GM12878 (cell line): ENCODE measurements at regions of chr1 and their contacts with region 1.

Region 1: GRCh38 chr1:209784265-209785169 is at the start of gene C1orf74:
- DNase-seq: peak; percentile 92
- ATAC-seq: peak; percentile 100
- H3K4me3 ChIP-seq: peak within 1 kb of the TSS; percentile 80
- H3K27ac ChIP-seq: peak within 1 kb of the TSS; percentile 76
- H3K4me1 ChIP-seq: 0 out of 2 replicates have a peak, but pooled peaks cover 2% of the 10 kb centered on the region
- H3K27me3 ChIP-seq: no peaks in the 10 kb centered on the region
- CTCF ChIP-seq: no peak
- EP300 ChIP-seq: no peak
- POLR2A ChIP-seq: peak; percentile 90
- RAD21 ChIP-seq: no peak
- polyA plus RNA-seq, gene C1orf74: 3.4 to 4.4 TPM

Region 2: GRCh38 chr1:209576798-209577197 is 207.7 kb before region 1 on chr1:
- CTCF ChIA-PET with region 1: no interaction called
- POLR2A ChIA-PET with region 1: no interaction called
- RAD21 ChIA-PET with region 1: no interaction called
- SMC1A ChIA-PET with region 1: no interaction called
- in situ Hi-C with region 1: no loop called
- intact Hi-C with region 1: no loop called
- DNase-seq: peak; percentile 12
- ATAC-seq: peak; percentile 99
- H3K4me3 ChIP-seq: no peak overlapping the region
- H3K27ac ChIP-seq: no peak overlapping the region
- H3K4me1 ChIP-seq: no peaks in the 10 kb centered on the region
- H3K27me3 ChIP-seq: peaks cover under 1 to 1% of the 10 kb centered on the region in 2 experiments; a peak in 3 of 4 replicates
- CTCF ChIP-seq: peak; percentile 93 to 96 (median 94)
- EP300 ChIP-seq: no peak
- POLR2A ChIP-seq: no peak
- RAD21 ChIP-seq: peak; percentile 86

Region 3: DNA sequence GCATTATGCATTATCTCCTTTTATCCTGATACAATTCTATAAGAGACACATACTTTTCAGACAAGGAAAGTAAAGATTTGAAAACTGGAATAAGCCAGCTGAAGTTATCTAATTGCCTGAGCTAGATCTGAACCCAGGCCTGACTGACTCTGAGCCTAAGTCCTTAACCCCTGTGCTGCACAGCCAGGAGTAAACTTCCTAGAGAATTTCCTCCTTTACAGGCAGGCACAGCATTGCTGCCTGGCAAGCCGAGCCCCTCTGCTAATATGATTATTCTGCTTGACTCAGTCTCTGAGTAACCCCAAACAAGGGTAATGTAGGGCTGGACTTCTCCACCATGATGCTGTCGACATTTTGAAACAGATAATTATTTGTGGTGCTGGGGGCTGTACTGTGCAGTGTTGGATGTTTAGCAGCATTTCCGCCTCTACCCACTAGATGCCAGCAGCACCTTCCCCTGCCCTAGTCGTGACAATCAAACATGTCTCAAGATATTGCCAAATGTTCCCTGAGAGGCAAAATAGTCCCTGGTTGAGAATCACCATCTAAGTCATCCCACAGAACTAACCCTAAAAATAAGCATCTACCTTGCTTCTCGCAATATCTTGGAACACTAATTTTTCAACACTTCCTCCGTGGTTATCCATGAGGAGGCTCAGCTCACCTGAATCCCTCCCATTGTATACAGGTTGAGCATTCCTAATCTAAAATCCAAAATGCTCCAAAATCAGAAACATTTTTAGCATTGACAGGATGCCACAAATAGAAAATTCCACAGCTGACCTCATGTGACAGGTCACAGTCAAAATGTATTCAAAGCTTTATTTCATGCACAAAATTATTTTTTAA is 182.5 kb before region 1 on chr1:
- CTCF ChIA-PET with region 1: no interaction called
- POLR2A ChIA-PET with region 1: no interaction called
- RAD21 ChIA-PET with region 1: no interaction called
- SMC1A ChIA-PET with region 1: no interaction called
- in situ Hi-C with region 1: no loop called
- intact Hi-C with region 1: no loop called
- DNase-seq: no peak
- ATAC-seq: peak; percentile 95
- H3K4me3 ChIP-seq: no peak overlapping the region
- H3K27ac ChIP-seq: no peak overlapping the region
- H3K4me1 ChIP-seq: peaks cover under 1% of the 10 kb centered on the region; the same call in 1 of the 2 replicates
- H3K27me3 ChIP-seq: no peaks in the 10 kb centered on the region
- CTCF ChIP-seq: peak; percentile 64 to 82 (median 70); a peak in 5 of 6 replicates
- EP300 ChIP-seq: no peak
- POLR2A ChIP-seq: no peak
- RAD21 ChIP-seq: peak; percentile 67

Region 4: GRCh38 chr1:209769171-209769904 is 15.2 kb before region 1 on chr1:
- CTCF ChIA-PET with region 1: interaction called, 11 read pairs
- POLR2A ChIA-PET with region 1: interaction called, 27 read pairs
- RAD21 ChIA-PET with region 1: interaction called, 19 read pairs
- SMC1A ChIA-PET with region 1: interaction called, 31 read pairs
- in situ Hi-C with region 1: no loop called
- intact Hi-C with region 1: no loop called
- DNase-seq: peak; percentile 75
- ATAC-seq: peak; percentile 84
- H3K4me3 ChIP-seq: peak overlapping the region; percentile 72
- H3K27ac ChIP-seq: peak overlapping the region; percentile 93
- H3K4me1 ChIP-seq: peaks cover 52% of the 10 kb centered on the region
- H3K27me3 ChIP-seq: no peaks in the 10 kb centered on the region
- CTCF ChIP-seq: no peak
- EP300 ChIP-seq: peak; percentile 73 to 79; a peak in 3 of 4 replicates
- POLR2A ChIP-seq: no peak
- RAD21 ChIP-seq: no peak

Region 5: DNA sequence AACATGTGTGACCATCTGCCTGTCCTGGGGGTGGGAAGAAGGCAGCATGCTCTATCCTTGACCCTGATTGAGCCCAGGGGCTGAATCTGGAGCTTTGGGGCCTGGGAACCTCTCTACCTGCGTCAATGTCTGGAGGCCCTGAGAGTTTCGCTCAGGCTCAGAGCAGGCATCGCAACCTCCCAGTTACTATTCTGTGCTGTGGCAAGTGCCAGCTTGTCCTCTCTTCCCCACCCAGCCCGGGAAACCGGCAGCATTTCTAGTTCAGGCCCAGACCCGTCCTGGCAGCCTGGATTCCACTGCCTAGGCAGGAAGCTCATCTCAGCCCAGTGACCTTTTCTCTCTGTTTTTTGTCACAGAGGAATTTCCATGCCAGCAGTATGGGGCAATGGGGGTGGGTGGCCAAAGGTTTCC is 31.4 kb after region 1 on chr1:
- CTCF ChIA-PET with region 1: interaction called, 72 read pairs
- POLR2A ChIA-PET with region 1: interaction called, 4 read pairs
- RAD21 ChIA-PET with region 1: interaction called, 6 read pairs
- SMC1A ChIA-PET with region 1: interaction called, 24 read pairs
- in situ Hi-C with region 1: no loop called
- intact Hi-C with region 1: no loop called
- DNase-seq: no peak
- ATAC-seq: peak; percentile 64
- H3K4me3 ChIP-seq: no peak overlapping the region
- H3K27ac ChIP-seq: no peak overlapping the region
- H3K4me1 ChIP-seq: no peaks in the 10 kb centered on the region
- H3K27me3 ChIP-seq: no peaks in the 10 kb centered on the region; a peak in 1 of 4 replicates
- CTCF ChIP-seq: no peak
- EP300 ChIP-seq: no peak
- POLR2A ChIP-seq: no peak
- RAD21 ChIP-seq: no peak

Region 6: GRCh38 chr1:210754878-210755665 is 970.6 kb after region 1 on chr1:
- CTCF ChIA-PET with region 1: no interaction called
- POLR2A ChIA-PET with region 1: no interaction called
- RAD21 ChIA-PET with region 1: no interaction called
- SMC1A ChIA-PET with region 1: no interaction called
- in situ Hi-C with region 1: no loop called
- intact Hi-C with region 1: no loop called
- DNase-seq: no peak
- ATAC-seq: no peak
- H3K4me3 ChIP-seq: no peak overlapping the region
- H3K27ac ChIP-seq: no peak overlapping the region
- H3K4me1 ChIP-seq: no peaks in the 10 kb centered on the region
- H3K27me3 ChIP-seq: 0 out of 4 replicates have a peak, but pooled peaks cover 0 to 2% of the 10 kb centered on the region in 2 experiments
- CTCF ChIP-seq: no peak
- EP300 ChIP-seq: no peak
- POLR2A ChIP-seq: no peak
- RAD21 ChIP-seq: no peak